WTC11 (cell line): ENCODE measurements at regions of chrX and their contacts with region 1.

Region 1: GRCh38 chrX:153507484-153508178 is 9.8 kb upstream of the ATP2B3 start:
- DNase-seq: peak; percentile 86
- ATAC-seq: peak; percentile 96
- H3K4me3 Mint-ChIP-seq: no peak overlapping the region
- H3K27ac Mint-ChIP-seq: no peak overlapping the region
- H3K4me1 Mint-ChIP-seq: 0 out of 2 replicates have a peak, but pooled peaks cover 2% of the 10 kb centered on the region
- H3K27me3 Mint-ChIP-seq: no peaks in the 10 kb centered on the region
- CTCF ChIP-seq: peak; percentile 71

Region 2: GRCh38 chrX:153460845-153461244 is 46.8 kb before region 1 on chrX:
- CTCF ChIA-PET with region 1: interaction called, 41 read pairs
- POLR2A ChIA-PET with region 1: no interaction called
- DNase-seq: peak; percentile 73
- ATAC-seq: peak; percentile 81
- H3K4me3 Mint-ChIP-seq: no peak overlapping the region
- H3K27ac Mint-ChIP-seq: no peak overlapping the region
- H3K4me1 Mint-ChIP-seq: no peaks in the 10 kb centered on the region
- H3K27me3 Mint-ChIP-seq: no peaks in the 10 kb centered on the region
- CTCF ChIP-seq: 0 out of 2 replicates have a peak, but pooled peaks have one; percentile 21

Region 3: GRCh38 chrX:153470435-153471363 is 36.9 kb before region 1 on chrX and contains the start of gene HAUS7:
- CTCF ChIA-PET with region 1: interaction called, 54 read pairs
- POLR2A ChIA-PET with region 1: interaction called, 3 read pairs
- DNase-seq: peak; percentile 85
- ATAC-seq: peak; percentile 88
- H3K4me3 Mint-ChIP-seq: peak within 1 kb of the TSS; percentile 76
- H3K27ac Mint-ChIP-seq: no peak within 1 kb of the TSS
- H3K4me1 Mint-ChIP-seq: no peaks in the 10 kb centered on the region
- H3K27me3 Mint-ChIP-seq: peaks cover 21% of the 10 kb centered on the region
- CTCF ChIP-seq: peak; percentile 32; the same call in 1 of the 2 replicates
- total RNA-seq, gene HAUS7: 46.5 to 52.9 TPM (median 52.2 TPM) in 3 replicates

Region 4: DNA sequence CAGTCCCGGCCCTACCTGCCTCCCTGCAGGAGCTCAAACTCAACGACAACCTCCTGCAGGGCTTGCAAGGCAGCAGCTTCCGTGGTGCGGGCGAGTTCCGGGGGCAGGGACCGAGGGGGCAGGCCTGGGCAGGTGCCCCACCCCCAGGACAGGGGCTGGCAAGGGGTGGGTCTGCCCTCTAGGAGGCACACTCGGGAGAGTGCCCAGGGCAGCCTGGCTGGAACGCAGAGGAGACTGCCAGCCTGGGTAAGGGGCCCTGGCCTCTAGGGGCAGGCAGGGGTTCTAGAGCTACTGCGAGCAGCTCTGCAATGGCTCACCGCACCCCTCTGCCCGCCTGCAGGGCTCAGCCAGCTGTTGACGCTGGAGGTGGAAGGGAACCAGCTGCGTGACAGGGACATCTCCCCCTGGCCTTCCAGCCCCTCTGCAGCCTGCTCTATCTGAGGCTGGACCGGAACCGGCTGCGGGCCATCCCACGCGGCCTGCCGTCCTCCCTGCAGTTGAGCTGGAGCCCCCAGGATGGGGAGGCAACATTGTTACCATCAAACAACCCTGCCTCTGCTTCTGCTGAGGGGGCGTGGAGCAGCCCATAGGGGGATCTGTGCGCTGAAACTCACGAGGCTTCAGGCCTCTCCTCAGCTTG is 25.1 kb before region 1 on chrX:
- CTCF ChIA-PET with region 1: interaction called, 10 read pairs
- POLR2A ChIA-PET with region 1: no interaction called
- DNase-seq: no peak
- ATAC-seq: peak; percentile 31
- H3K4me3 Mint-ChIP-seq: no peak overlapping the region
- H3K27ac Mint-ChIP-seq: no peak overlapping the region
- H3K4me1 Mint-ChIP-seq: peaks cover 7% of the 10 kb centered on the region
- H3K27me3 Mint-ChIP-seq: peaks cover 4% of the 10 kb centered on the region; the same call in 1 of the 2 replicates
- CTCF ChIP-seq: no peak